CD14-positive monocyte (primary cell): ENCODE measurements at regions of chr21 and their contacts with region 1.

Region 1: DNA sequence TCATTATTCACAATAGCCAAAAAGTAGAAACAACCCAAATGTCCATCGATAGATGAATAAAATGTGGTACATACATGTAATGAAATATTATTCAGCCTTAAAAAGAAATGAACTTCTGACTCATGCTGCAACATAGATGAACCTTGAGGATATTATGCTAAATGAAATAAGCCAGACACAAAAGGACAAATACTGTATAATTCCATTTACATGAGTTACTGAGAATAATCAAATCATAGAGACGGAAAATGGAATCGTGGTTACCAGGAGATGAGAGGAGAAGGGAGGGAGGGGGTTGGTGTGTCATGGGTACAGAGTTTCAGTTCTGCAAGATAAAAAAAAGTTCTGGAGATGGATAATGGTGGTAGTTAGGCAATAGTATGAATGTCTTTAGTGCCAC is 184.1 kb downstream of the PSMG1 start:
- DNase-seq: peak; percentile 61 to 70 (median 67)
- H3K4me3 ChIP-seq: no peak overlapping the region
- H3K4me3 Mint-ChIP-seq: no peak overlapping the region
- H3K27ac ChIP-seq: peak overlapping the region in 1 of 2 donors; percentile 72
- H3K27ac Mint-ChIP-seq: peak overlapping the region in 6 of 7 donors; percentile 47 to 96 (median 88)
- H3K4me1 ChIP-seq: peaks cover 61 to 74% of the 10 kb centered on the region in 2 donors
- H3K4me1 Mint-ChIP-seq: peaks cover 66% of the 10 kb centered on the region
- H3K27me3 ChIP-seq: no peaks in the 10 kb centered on the region
- H3K27me3 Mint-ChIP-seq: peaks cover 0 to 6% (median 2%) of the 10 kb centered on the region in 3 donors
- CTCF ChIP-seq: no peak

Region 2: DNA sequence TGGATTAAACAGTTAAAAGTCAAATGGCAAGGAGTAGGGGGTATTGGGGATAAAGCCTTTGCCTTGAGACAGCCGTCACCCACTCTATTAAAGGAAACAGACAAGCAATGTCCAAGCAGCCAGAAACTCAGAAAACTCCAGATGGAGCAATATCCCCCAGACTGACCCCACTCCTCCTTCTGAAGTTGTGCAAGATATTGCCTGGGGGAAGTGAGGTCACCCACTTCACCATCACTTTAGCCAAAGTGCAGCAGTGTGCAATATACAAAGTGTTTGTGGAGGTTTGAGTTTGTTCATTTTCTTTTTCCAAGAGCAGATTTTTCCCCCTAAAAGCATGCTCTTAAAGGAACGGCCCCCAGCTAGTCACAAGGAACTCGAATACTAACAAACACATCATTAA is 68.3 kb before region 1 on chr21:
- intact Hi-C with region 1: loop called in 1 of 2 experiments (anchors 2 kb)
- DNase-seq: peak; percentile 86 to 95 (median 91)
- H3K4me3 ChIP-seq: peak overlapping the region in 1 of 3 experiments; percentile 55
- H3K4me3 Mint-ChIP-seq: peak overlapping the region; percentile 1 to 84
- H3K27ac ChIP-seq: peak overlapping the region; percentile 74 to 93
- H3K27ac Mint-ChIP-seq: peak overlapping the region; percentile 91 to 98 (median 96)
- H3K4me1 ChIP-seq: peaks cover 45 to 51% of the 10 kb centered on the region in 2 donors
- H3K4me1 Mint-ChIP-seq: peaks cover 61% of the 10 kb centered on the region
- H3K27me3 ChIP-seq: no peaks in the 10 kb centered on the region
- H3K27me3 Mint-ChIP-seq: peaks cover 0 to 2% (median 0%) of the 10 kb centered on the region in 3 donors
- CTCF ChIP-seq: no peak